Activated T-helper 1 cell treated with anti-CD3 and anti-CD28 coated beads, Interleukin-12 subunit alpha, Interleukin-12 subunit beta, Interleukin-2, Interleukin-4 antibody, amounts not matched to agents 30 ng/mL and 10 ng/mL and 1 ng/mL, durations not matched to agents 14 hours and 24 hours and 36 hours (primary cell): ENCODE measurements at regions of chr10 and their contacts with region 1.

Region 1: GRCh38 chr10:88835096-88835909 is 16.3 kb downstream of the ANKRD22 start:
- DNase-seq: peak; percentile 81
- H3K4me3 Mint-ChIP-seq: no peak overlapping the region
- H3K27ac Mint-ChIP-seq: no peak overlapping the region
- H3K4me1 Mint-ChIP-seq: peaks cover 33% of the 10 kb centered on the region
- H3K27me3 Mint-ChIP-seq: no peaks in the 10 kb centered on the region

Region 2: GRCh38 chr10:88763441-88763840 is 71.9 kb before region 1 on chr10:
- intact Hi-C with region 1: no loop called
- DNase-seq: no peak
- H3K4me3 Mint-ChIP-seq: no peak overlapping the region
- H3K27ac Mint-ChIP-seq: no peak overlapping the region
- H3K4me1 Mint-ChIP-seq: peaks cover 6% of the 10 kb centered on the region
- H3K27me3 Mint-ChIP-seq: peaks cover 26% of the 10 kb centered on the region

Region 3: DNA sequence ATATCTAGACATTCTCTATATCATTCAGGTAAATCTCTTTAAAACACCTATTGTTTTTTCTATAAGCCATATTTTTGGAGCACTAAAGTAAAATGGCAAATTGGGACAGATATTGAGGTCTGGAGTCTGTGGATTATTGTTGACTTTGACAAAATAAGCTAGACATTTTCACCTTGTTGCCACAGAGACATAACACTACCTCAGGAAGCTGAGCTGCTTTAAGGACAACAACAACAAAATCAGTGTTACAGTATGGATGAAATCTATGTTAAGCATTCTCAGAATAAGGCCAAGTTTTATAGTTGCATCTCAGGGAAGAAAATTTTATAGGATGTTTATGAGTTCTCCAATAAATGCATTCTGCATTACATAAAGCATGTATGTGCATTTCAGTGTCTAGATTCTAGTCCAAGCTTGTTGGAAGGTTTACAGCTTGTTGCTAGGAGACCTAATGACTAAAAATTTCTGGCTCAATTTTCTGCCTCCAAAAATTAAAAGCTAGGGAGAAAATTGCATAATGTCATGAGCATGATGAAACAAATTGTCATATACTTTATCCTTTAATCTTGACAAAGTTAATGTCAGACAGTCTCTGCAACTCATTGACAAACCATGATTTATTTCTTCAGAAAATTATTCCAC is 14.4 kb before region 1 on chr10:
- intact Hi-C with region 1: loop called (anchors 1 kb)
- DNase-seq: no peak
- H3K4me3 Mint-ChIP-seq: no peak overlapping the region
- H3K27ac Mint-ChIP-seq: no peak overlapping the region
- H3K4me1 Mint-ChIP-seq: peaks cover 51% of the 10 kb centered on the region
- H3K27me3 Mint-ChIP-seq: peaks cover 7% of the 10 kb centered on the region

Region 4: DNA sequence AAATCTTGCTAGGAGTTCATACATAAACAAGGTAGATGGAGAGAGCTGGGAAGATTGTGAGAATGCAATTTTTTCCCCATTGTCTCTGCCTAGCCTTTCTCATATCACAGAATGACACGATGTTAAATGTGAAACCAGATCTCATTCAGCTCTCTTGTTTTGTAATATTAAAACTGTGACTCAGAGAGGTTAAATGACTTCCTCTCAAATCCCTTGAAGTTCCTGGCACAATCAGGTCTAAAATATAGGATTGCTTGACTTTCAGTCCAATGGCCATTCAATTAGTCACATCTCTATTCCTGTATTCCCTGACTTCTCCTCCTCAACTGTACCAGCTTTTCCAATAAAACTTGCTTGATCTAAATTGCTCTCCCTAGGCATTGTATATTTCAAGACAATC is 13.2 kb after region 1 on chr10:
- intact Hi-C with region 1: loop called (anchors 1 kb)
- DNase-seq: no peak
- H3K4me3 Mint-ChIP-seq: peak overlapping the region; percentile 0
- H3K27ac Mint-ChIP-seq: peak overlapping the region; percentile 45
- H3K4me1 Mint-ChIP-seq: peaks cover 28% of the 10 kb centered on the region
- H3K27me3 Mint-ChIP-seq: peaks cover 4% of the 10 kb centered on the region

Region 5: GRCh38 chr10:88865281-88865876 is 30.1 kb after region 1 on chr10:
- intact Hi-C with region 1: loop called (anchors 1 kb)
- DNase-seq: no peak
- H3K4me3 Mint-ChIP-seq: no peak overlapping the region
- H3K27ac Mint-ChIP-seq: no peak overlapping the region
- H3K4me1 Mint-ChIP-seq: no peaks in the 10 kb centered on the region
- H3K27me3 Mint-ChIP-seq: peaks cover 20% of the 10 kb centered on the region

Region 6: GRCh38 chr10:88880282-88881076 is 45.2 kb after region 1 on chr10:
- intact Hi-C with region 1: loop called (anchors 1 kb)
- DNase-seq: peak; percentile 68
- H3K4me3 Mint-ChIP-seq: peak overlapping the region; percentile 98
- H3K27ac Mint-ChIP-seq: peak overlapping the region; percentile 99
- H3K4me1 Mint-ChIP-seq: peaks cover 74% of the 10 kb centered on the region
- H3K27me3 Mint-ChIP-seq: no peaks in the 10 kb centered on the region

Region 7: DNA sequence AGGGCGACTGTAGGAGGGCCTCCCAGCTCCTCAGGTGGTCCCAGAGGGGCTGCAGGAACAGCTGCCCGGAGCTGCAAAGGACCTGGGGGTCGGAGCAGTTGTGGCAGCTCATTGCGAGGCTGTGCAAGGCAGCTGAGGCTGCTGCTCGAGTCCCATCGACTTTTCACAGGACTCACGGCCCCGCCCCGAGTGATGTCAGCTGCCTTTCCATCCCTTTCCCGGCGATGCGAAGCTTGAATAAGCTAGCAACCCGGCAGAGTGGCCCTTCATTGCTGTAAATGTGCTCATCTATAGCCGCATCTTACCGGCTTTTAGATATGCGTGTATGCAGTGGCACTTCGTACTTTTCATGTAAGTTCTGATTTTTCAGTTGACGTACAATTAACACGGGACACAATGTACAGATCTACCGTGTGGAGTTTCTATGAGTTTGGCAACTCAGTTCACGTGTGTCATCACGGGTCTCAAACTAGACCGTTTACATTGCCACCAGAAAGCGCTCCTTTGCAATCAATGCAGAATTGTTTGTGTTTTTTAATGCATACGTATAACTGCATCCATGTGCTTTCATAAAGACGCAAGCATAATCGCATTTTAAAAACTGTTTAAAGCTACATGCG is 372.0 kb after region 1 on chr10 and contains the start of gene CH25H:
- intact Hi-C with region 1: loop called (anchors 2 kb)
- DNase-seq: peak; percentile 17
- H3K4me3 Mint-ChIP-seq: peak within 1 kb of the TSS; percentile 81
- H3K27ac Mint-ChIP-seq: peak within 1 kb of the TSS; percentile 61
- H3K4me1 Mint-ChIP-seq: peaks cover 11% of the 10 kb centered on the region
- H3K27me3 Mint-ChIP-seq: peaks cover 32% of the 10 kb centered on the region
- total RNA-seq, gene CH25H: not detected in 2 replicates